PC-3 (cell line): ENCODE measurements at regions of chr7 and their contacts with region 1.

Region 1: DNA sequence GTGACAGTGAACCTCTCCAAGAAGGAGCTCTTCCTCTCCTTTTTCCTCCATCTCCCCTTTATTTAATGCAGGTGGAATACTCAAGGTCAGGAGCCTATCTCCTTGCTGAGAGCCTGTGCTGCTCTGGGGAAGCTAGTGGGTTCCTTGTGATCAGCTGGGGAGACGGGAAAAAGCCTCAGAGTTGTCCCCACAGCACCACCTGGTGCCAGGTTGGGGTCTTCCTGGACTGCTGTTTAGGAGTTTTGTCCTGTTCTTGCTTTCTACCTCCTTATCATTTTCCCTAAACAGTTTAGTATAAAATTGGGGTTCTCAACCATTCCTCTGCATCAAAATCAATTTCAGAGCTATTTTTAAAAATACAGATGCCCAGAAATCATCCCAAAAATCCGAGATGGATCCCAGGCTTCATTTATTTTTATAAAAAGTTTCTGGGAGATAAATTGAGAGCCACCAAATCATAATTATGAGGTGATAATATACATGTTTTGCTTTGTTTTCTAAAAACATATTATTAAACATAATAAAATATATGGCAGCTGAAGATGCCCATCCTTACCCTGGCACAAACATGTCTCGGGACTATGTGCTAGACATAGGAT is 44.3 kb downstream of the MACC1 start:
- DNase-seq: peak; percentile 74
- ATAC-seq: peak; percentile 99
- H3K4me3 ChIP-seq: no peak overlapping the region
- H3K27ac ChIP-seq: no peak overlapping the region
- H3K4me1 ChIP-seq: no peaks in the 10 kb centered on the region
- H3K27me3 ChIP-seq: no peaks in the 10 kb centered on the region
- CTCF ChIP-seq: peak; percentile 77

Region 2: GRCh38 chr7:19982841-19983835 is 189.7 kb before region 1 on chr7:
- CTCF ChIA-PET with region 1: interaction called, 6 read pairs
- POLR2A ChIA-PET with region 1: no interaction called
- intact Hi-C with region 1: loop called (anchors 2 kb)
- DNase-seq: peak; percentile 69
- ATAC-seq: peak; percentile 66
- H3K4me3 ChIP-seq: no peak overlapping the region
- H3K27ac ChIP-seq: no peak overlapping the region
- H3K4me1 ChIP-seq: no peaks in the 10 kb centered on the region
- H3K27me3 ChIP-seq: no peaks in the 10 kb centered on the region
- CTCF ChIP-seq: peak; percentile 61

Region 3: DNA sequence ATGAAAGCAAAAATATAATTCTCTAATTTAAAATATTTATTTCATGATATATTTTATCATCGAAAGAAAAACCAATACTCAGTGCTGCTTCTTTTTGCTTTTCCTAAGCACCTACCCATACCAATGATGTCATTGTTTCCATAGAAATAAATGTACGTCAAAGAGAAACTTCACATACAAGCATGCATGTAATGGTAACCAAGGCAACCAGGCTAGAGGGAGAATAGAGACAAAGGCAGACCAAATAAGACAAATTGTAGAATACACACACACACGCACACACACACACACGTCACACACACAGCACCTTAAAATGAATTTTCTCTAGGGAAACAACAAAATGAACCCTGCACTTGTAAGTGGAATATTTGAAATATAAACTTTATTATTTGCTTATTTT is 31.2 kb before region 1 on chr7:
- CTCF ChIA-PET with region 1: no interaction called
- POLR2A ChIA-PET with region 1: no interaction called
- intact Hi-C with region 1: no loop called
- DNase-seq: no peak
- ATAC-seq: no peak
- H3K4me3 ChIP-seq: no peak overlapping the region
- H3K27ac ChIP-seq: no peak overlapping the region
- H3K4me1 ChIP-seq: no peaks in the 10 kb centered on the region
- H3K27me3 ChIP-seq: no peaks in the 10 kb centered on the region
- CTCF ChIP-seq: no peak